Calu3 (cell line): ENCODE measurements at regions of chr6 and their contacts with region 1.

Region 1: DNA sequence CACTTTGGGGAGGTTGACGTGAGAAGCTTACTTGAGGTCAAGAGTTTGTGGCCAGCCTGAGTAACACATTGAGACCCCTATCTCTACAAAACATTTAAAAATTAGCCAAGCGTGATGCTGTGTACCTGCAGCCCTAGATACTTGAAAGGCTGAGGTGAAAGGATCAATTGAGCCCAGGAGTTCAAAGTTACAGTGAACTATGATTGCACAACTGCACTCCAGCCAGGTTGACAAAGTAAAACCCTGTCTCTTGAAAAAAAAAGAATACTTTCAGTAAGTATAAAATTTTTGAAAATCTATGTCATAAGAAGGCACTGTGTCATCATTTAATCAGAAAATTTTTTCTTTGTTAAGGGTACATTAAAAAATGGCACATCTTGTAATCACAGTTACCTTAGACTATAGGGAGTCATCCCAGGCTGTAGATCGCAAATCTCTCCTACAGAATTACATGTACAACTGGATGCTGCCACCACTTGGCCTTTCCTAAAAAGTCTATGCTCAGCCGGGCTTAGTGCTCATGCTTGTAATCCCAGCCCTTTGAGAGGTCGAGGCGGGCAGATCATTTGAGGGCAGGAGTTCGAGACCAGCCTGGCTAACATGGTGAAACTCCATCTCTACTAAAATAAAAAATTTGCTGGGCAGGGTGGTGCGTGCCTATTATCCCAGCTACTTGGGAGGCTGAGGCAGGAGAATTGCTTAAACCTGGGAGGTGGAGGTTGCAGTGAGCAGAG is 17.0 kb upstream of the MRS2 start:
- DNase-seq: peak; percentile 60
- H3K4me3 Mint-ChIP-seq: peak overlapping the region; percentile 3
- H3K27ac Mint-ChIP-seq: peak overlapping the region; percentile 72
- H3K4me1 Mint-ChIP-seq: peaks cover 66% of the 10 kb centered on the region
- H3K27me3 Mint-ChIP-seq: no peaks in the 10 kb centered on the region
- CTCF ChIP-seq: no peak

Region 2: DNA sequence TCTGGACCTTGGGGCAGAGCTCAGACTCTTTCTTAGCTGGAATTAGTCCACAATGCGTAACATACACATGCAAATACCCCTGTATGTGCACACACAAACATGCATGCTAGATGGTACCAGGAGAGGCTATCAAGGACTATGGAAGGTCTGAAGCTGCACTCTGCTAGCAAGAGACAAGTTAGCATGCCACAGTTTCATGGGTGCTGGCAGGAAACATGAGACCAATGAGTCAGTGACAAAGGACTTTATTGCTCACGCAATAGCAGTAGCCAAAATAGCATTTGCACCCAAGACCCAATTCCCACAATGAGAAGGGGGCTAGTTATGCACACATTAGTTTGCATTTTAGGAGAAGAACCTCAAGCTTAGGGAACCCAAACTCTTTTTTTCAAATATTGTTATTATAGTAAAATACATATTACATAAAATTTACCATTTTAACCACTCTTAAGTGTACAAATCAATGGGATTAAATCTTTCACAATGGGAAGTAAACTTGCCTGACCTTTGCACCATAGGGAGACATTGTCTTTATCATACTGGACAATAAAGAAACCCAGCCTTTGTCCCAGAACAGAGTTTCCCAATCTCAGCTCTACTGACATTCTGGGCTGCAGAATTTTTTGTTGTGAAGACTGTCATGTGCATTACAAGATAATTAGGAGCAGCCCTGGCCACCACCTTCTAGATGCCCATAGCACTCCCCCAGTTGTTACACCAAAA is 190.6 kb before region 1 on chr6:
- CTCF ChIA-PET with region 1: no interaction called
- intact Hi-C with region 1: loop called (anchors 5 kb)
- DNase-seq: no peak
- H3K4me3 Mint-ChIP-seq: peak overlapping the region; percentile 52
- H3K27ac Mint-ChIP-seq: peak overlapping the region; percentile 96
- H3K4me1 Mint-ChIP-seq: peaks cover 68% of the 10 kb centered on the region
- H3K27me3 Mint-ChIP-seq: no peaks in the 10 kb centered on the region
- CTCF ChIP-seq: no peak

Region 3: GRCh38 chr6:24340998-24341938 is 44.4 kb before region 1 on chr6:
- CTCF ChIA-PET with region 1: no interaction called
- intact Hi-C with region 1: loop called (anchors 5 kb)
- DNase-seq: peak; percentile 67
- H3K4me3 Mint-ChIP-seq: peak overlapping the region; percentile 27
- H3K27ac Mint-ChIP-seq: peak overlapping the region; percentile 80
- H3K4me1 Mint-ChIP-seq: peaks cover 69% of the 10 kb centered on the region
- H3K27me3 Mint-ChIP-seq: no peaks in the 10 kb centered on the region
- CTCF ChIP-seq: no peak

Region 4: DNA sequence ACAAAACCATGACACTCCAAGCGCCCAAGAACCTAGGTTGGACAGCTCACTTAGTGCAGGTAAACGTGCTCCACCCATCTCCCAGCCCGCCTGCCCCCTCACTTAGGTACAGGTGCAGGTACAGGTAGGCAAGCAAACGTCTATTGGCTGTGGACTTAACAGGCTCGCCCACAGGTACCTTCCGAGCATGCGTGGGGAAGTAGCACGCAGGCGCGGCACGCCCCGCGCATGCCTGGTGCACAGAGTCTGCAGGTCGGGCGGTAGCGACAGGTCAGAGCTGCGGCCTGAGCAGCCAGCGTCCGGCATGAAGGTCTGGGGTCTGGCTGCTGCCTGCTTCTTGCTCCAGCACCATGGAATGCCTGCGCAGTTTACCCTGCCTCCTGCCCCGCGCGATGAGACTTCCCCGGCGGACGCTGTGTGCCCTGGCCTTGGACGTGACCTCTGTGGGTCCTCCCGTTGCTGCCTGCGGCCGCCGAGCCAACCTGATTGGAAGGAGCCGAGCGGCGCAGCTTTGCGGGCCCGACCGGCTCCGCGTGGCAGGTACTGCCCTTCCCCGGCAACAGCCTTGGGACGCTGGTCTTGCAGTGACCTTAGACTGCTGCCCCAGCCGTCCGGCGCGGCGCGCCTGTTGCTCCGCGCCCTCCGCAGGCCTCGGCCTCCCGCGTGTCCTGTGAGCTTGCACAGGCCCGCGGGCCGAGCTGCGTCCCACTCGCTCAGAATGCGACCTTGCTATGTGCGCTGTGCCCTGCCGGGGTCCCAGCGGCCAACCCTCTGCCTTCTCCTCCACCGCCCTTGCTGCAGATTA is 17.2 kb after region 1 on chr6 and contains the start of gene MRS2:
- CTCF ChIA-PET with region 1: interaction called, 11 read pairs
- intact Hi-C with region 1: no loop called
- DNase-seq: peak; percentile 97
- H3K4me3 Mint-ChIP-seq: peak within 1 kb of the TSS; percentile 97
- H3K27ac Mint-ChIP-seq: peak within 1 kb of the TSS; percentile 85
- H3K4me1 Mint-ChIP-seq: peaks cover 32% of the 10 kb centered on the region
- H3K27me3 Mint-ChIP-seq: no peaks in the 10 kb centered on the region
- CTCF ChIP-seq: no peak
- total RNA-seq, gene MRS2: 56.0 and 56.7 TPM in 2 replicates

Region 5: DNA sequence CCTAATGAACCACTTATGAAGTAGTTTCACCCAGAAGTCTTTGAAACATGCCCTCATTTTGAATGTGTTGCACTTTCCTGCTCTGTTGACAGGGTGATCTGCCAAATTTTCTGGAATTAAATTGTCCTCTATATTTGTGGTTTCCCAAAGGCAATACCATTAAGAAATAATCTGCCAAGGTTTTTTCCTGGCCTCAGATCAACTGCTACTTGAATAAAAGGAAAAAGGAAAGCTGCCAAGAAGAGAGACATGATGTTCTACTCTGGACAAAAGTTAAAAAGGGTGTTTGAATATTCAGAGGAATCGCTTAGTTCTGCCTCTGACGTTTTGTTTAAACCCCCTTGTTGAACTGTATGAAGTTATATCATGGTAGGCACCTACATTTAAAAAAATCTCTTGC is 450.4 kb after region 1 on chr6:
- CTCF ChIA-PET with region 1: no interaction called
- intact Hi-C with region 1: no loop called
- DNase-seq: no peak
- H3K4me3 Mint-ChIP-seq: no peak overlapping the region
- H3K27ac Mint-ChIP-seq: no peak overlapping the region
- H3K4me1 Mint-ChIP-seq: peaks cover 8% of the 10 kb centered on the region
- H3K27me3 Mint-ChIP-seq: peaks cover 12% of the 10 kb centered on the region
- CTCF ChIP-seq: no peak